ENCODE measurements at regions of chr12 and their contacts with region 1.

Region 1: DNA sequence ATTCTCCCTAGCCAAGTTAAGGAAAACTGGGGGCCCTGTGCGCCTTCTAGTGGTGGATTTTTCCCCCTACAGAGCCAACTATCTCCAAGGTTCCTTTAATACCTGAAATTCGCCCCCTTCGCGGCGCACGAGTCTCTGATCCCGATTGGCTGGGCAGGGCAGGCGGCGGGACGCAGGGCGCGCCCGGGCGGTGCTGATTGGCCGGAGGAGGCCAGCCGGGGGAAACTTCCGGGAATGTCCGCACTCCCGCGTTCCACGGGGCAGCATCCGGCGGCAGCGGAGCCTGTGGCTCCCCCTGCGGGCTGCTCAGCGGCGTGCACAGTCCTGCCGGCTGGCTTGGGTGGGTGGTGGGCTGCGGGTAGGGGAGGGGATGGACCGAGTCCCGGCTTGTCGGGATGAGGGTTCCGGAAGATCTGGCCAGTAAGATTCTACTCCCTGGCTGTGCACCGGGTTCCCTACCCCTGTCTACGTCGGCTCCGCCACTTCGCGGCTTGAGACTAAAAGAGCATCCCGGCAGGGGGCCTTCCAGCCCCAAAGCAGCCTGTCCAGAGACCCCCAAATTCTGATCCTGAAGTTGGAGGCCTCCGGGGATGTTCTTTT is at the start of gene NABP2:
- DNase-seq: peak; percentile 88 to 93 (median 89)
- H3K4me3 ChIP-seq: peak within 1 kb of the TSS; percentile 28 to 79
- H3K4me3 Mint-ChIP-seq: peak within 1 kb of the TSS; percentile 83 to 99 (median 87)
- H3K27ac ChIP-seq: peak within 1 kb of the TSS; percentile 83
- H3K27ac Mint-ChIP-seq: peak within 1 kb of the TSS; percentile 90 to 100 (median 99)
- H3K4me1 ChIP-seq: peaks cover 42% of the 10 kb centered on the region
- H3K4me1 Mint-ChIP-seq: peaks cover 24 to 58% (median 43%) of the 10 kb centered on the region in 4 donors
- H3K27me3 ChIP-seq: no peaks in the 10 kb centered on the region
- H3K27me3 Mint-ChIP-seq: no peaks in the 10 kb centered on the region
- total RNA-seq, gene NABP2: 16.9 to 19.1 TPM

Region 2: DNA sequence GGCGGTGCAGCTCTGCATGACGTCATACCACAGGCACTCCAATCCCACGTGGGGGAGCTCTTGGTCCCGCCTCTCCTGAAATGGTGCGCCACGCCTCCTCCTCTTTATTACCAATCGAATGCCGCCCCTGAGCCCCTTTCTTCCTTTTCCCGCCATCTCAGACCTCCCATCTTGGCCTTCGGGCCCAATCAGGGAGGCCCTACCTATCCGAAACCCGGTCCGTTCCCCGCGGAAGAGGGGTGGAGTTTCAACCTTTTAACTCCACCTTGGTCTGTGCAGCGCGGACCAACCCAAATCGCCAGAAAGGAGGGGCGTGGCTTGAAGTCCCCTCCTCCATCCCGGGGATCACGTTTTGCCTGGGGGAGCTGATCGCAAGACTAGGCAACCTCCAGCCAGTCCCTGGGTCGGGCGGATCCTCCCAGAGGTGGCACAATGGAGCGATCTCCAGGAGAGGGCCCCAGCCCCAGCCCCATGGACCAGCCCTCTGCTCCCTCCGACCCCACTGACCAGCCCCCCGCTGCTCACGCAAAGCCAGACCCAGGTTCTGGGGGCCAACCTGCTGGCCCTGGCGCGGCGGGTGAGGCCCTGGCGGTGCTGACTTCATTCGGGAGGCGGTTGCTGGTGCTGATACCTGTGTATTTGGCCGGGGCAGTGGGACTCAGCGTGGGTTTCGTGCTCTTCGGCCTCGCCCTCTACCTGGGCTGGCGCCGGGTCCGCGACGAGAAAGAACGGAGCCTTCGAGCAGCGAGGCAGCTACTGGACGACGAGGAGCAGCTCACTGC is 96.1 kb before region 1 on chr12 and contains the start of gene ESYT1:
- CTCF ChIA-PET with region 1: interaction called, 13 read pairs
- POLR2A ChIA-PET with region 1: interaction called, 66 read pairs
- intact Hi-C with region 1: loop called (anchors 1 kb)
- DNase-seq: peak; percentile 96 to 100 (median 99)
- H3K4me3 ChIP-seq: peak within 1 kb of the TSS; percentile 81 to 96
- H3K4me3 Mint-ChIP-seq: peak within 1 kb of the TSS; percentile 96 to 100 (median 98)
- H3K27ac ChIP-seq: peak within 1 kb of the TSS; percentile 82
- H3K27ac Mint-ChIP-seq: peak within 1 kb of the TSS; percentile 89 to 99 (median 98)
- H3K4me1 ChIP-seq: peaks cover 69% of the 10 kb centered on the region
- H3K4me1 Mint-ChIP-seq: peaks cover 46 to 84% (median 59%) of the 10 kb centered on the region in 4 donors
- H3K27me3 ChIP-seq: no peaks in the 10 kb centered on the region
- H3K27me3 Mint-ChIP-seq: no peaks in the 10 kb centered on the region
- total RNA-seq, gene ESYT1: 249 to 258 TPM

Region 3: GRCh38 chr12:56206457-56207166 is 17.6 kb before region 1 on chr12:
- CTCF ChIA-PET with region 1: interaction called, 30 read pairs
- POLR2A ChIA-PET with region 1: interaction called, 11 read pairs
- intact Hi-C with region 1: no loop called
- DNase-seq: peak in 4 of 5 donors; percentile 22 to 48 (median 24)
- H3K4me3 ChIP-seq: no peak overlapping the region
- H3K4me3 Mint-ChIP-seq: no peak overlapping the region
- H3K27ac ChIP-seq: no peak overlapping the region
- H3K27ac Mint-ChIP-seq: peak overlapping the region in 3 of 7 donors; percentile 33 to 55 (median 37)
- H3K4me1 ChIP-seq: no peaks in the 10 kb centered on the region
- H3K4me1 Mint-ChIP-seq: peaks cover 0 to 4% (median 2%) of the 10 kb centered on the region in 4 donors
- H3K27me3 ChIP-seq: no peaks in the 10 kb centered on the region
- H3K27me3 Mint-ChIP-seq: no peaks in the 10 kb centered on the region

Region 4: GRCh38 chr12:56315622-56316473 is 91.6 kb after region 1 on chr12 and contains the start of gene CNPY2:
- CTCF ChIA-PET with region 1: no interaction called
- POLR2A ChIA-PET with region 1: interaction called, 19 read pairs
- intact Hi-C with region 1: no loop called
- DNase-seq: peak; percentile 93 to 97 (median 95)
- H3K4me3 ChIP-seq: peak within 1 kb of the TSS; percentile 99 to 100
- H3K4me3 Mint-ChIP-seq: peak within 1 kb of the TSS; percentile 97 to 100 (median 98)
- H3K27ac ChIP-seq: peak within 1 kb of the TSS; percentile 95
- H3K27ac Mint-ChIP-seq: peak within 1 kb of the TSS; percentile 98 to 100 (median 99)
- H3K4me1 ChIP-seq: peaks cover 18% of the 10 kb centered on the region
- H3K4me1 Mint-ChIP-seq: peaks cover 1 to 25% (median 13%) of the 10 kb centered on the region in 4 donors
- H3K27me3 ChIP-seq: no peaks in the 10 kb centered on the region
- H3K27me3 Mint-ChIP-seq: no peaks in the 10 kb centered on the region
- total RNA-seq, gene CNPY2: 93.5 to 95.8 TPM

Region 5: GRCh38 chr12:56461235-56462159 is 237.3 kb after region 1 on chr12:
- CTCF ChIA-PET with region 1: interaction called, 27 read pairs
- POLR2A ChIA-PET with region 1: interaction called, 17 read pairs
- intact Hi-C with region 1: no loop called
- DNase-seq: no peak
- H3K4me3 ChIP-seq: no peak overlapping the region
- H3K4me3 Mint-ChIP-seq: no peak overlapping the region
- H3K27ac ChIP-seq: no peak overlapping the region
- H3K27ac Mint-ChIP-seq: no peak overlapping the region
- H3K4me1 ChIP-seq: peaks cover 8% of the 10 kb centered on the region
- H3K4me1 Mint-ChIP-seq: peaks cover 2 to 5% (median 5%) of the 10 kb centered on the region in 4 donors
- H3K27me3 ChIP-seq: no peaks in the 10 kb centered on the region
- H3K27me3 Mint-ChIP-seq: no peaks in the 10 kb centered on the region

Region 6: DNA sequence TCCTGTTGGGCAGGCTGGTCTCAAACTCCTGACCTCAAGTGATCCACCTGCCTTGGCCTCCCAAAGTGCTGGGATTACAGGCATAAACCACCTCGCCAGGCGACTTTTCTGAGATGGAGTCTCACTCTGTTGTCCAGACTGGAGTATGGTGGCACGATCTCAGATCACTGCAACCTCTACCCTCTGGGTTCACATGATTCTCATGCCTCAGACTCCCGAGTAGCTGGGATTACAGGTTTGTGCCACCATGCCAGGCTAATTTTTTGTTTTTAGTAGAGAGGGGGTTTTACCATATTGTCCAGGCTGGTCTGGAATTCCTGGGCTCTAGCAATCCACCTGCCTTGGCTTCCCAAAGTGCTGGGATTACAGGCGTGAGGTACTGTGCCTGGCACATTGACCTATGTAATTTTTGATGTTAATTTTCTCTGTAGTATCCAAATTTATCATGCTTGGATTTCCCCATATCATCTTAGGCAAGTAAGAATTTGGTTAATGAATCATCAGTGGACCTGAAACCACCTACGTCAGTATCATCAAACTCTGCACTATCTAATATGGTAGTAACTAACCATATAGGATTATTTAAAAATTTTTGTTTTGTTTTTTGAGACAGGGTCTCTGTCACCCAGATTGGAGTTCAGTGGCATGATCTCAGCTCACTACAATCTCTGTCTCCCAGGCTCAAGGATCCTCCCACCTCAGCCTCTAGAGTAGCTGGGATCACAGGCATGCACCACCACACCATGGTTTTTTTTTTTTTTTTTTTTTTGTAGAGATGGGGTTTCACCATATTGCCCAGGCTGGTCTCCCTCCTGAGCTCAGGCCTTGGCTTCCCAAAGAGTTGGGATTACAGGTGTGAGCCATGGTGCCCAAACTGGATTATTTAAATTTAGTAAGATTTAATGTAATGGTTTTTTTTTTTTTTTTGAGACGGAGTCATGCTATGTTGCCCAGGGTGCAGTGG is 433.5 kb after region 1 on chr12:
- CTCF ChIA-PET with region 1: no interaction called
- POLR2A ChIA-PET with region 1: no interaction called
- intact Hi-C with region 1: no loop called
- DNase-seq: no peak
- H3K4me3 ChIP-seq: no peak overlapping the region
- H3K4me3 Mint-ChIP-seq: no peak overlapping the region
- H3K27ac ChIP-seq: no peak overlapping the region
- H3K27ac Mint-ChIP-seq: no peak overlapping the region
- H3K4me1 ChIP-seq: no peaks in the 10 kb centered on the region
- H3K4me1 Mint-ChIP-seq: peaks cover 0 to 2% (median 1%) of the 10 kb centered on the region in 4 donors
- H3K27me3 ChIP-seq: no peaks in the 10 kb centered on the region
- H3K27me3 Mint-ChIP-seq: no peaks in the 10 kb centered on the region